RWPE1 (cell line): ENCODE measurements at regions of chr10 and their contacts with region 1.

Region 1: DNA sequence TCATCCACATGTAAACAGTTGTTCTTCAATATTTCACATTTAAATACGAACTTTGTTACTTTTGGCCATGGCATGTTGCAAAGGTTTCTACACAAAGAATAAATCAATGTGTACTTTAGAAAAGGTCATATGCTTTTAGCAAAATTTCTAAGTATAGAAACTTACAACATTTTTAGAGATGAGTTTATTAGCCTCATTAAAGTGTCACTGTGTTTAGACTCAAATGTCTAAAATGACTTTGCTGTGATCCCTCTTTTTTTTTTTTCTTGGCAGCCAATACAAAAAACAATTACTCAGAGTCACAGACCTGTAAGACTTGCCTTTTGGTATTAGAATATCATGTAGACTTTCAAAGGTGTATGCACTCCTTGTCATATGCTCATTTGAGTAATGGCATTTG is 349.3 kb upstream of the KIAA1217 start:
- DNase-seq: no peak
- H3K27ac ChIP-seq: no peak overlapping the region
- CTCF ChIP-seq: no peak

Region 2: GRCh38 chr10:25661621-25662020 is 1802.0 kb after region 1 on chr10:
- CTCF ChIA-PET with region 1: interaction called, 11 read pairs
- POLR2A ChIA-PET with region 1: no interaction called
- DNase-seq: no peak
- H3K27ac ChIP-seq: no peak overlapping the region
- CTCF ChIP-seq: no peak